Activated CD4-positive, alpha-beta T cell treated with anti-CD3 and anti-CD28 coated beads for 36 hours (primary cell): ENCODE measurements at regions of chrX and their contacts with region 1.

Region 1: DNA sequence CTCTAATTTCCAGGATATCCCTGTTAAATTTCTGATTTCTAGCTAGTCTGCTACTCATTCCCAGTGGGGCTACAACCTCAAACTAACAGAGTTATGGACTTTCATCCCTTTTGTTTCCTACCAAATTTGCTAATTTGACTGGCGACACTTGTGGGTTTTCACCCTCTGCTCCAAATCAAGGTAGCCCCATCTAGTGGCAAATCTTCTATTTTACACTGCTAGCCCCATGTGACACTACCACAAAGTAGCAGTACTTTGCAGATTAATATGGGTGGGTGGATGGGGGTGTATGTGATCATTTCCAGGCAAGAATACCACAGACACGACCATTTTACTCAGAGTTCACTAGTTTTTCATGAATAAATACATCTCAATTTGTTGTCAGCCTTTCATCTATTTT is 150.3 kb downstream of the MSL3 start:
- DNase-seq: peak; percentile 32
- ATAC-seq: peak; percentile 84
- H3K4me3 Mint-ChIP-seq: no peak overlapping the region
- H3K27ac Mint-ChIP-seq: no peak overlapping the region
- H3K4me1 Mint-ChIP-seq: peaks cover 8% of the 10 kb centered on the region
- H3K27me3 Mint-ChIP-seq: no peaks in the 10 kb centered on the region

Region 2: DNA sequence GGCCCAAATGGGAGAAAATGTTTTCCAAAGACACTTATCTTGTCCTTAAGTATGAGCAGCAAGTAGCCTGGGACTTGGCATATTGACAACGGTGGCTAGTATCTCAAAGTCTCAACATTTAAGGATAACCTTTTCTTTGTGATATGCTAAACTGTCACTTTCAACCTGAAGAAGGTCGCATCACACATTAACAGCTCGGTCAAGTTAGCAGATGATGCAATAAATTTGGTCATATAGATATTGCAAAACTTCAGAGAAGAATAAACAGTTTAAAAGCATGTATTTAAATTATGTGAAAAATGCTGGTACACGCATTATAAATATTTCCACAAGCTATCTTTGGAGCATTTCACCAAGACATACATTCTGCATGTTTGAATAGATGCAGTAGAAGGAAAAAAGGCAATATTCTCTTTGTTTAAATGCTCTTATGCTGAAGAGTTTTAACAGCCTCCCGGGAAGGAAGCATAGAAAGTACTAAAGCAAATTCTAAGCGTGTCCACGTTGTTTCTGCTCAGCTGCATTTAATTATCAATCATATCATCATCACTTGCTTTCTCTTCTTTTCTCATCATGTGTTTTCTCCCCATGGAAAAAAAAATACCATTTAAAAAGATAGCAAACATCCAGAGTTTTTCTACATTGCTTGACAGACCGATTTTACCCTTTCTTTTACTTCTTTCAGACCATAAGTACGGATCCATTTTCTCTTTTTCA is 266.9 kb before region 1 on chrX:
- CTCF ChIA-PET with region 1: no interaction called
- POLR2A ChIA-PET with region 1: no interaction called
- intact Hi-C with region 1: no loop called
- DNase-seq: no peak
- ATAC-seq: no peak
- H3K4me3 Mint-ChIP-seq: no peak overlapping the region
- H3K27ac Mint-ChIP-seq: no peak overlapping the region
- H3K4me1 Mint-ChIP-seq: no peaks in the 10 kb centered on the region
- H3K27me3 Mint-ChIP-seq: peaks cover 8% of the 10 kb centered on the region

Region 3: DNA sequence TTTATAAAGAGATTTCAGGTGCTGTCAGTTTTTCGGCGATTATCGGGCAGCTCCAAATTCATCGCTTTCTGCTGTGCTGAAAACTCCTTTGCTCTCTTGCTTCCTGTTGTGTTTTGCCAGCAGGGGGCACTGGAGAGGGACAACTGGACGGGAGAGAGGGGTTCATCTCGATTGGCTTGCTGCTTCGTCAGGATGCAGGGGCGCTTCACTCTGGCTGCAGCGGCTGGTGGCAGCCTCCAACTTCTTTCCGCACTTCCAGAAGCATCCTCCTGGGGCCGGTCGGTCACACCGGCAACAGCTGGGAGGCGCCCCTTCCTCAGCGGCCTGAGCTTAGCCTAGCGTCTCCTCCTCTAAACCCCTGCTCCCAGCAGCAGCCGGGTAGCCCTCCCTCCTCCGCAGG is 120.8 kb before region 1 on chrX:
- CTCF ChIA-PET with region 1: interaction called, 7 read pairs
- POLR2A ChIA-PET with region 1: no interaction called
- intact Hi-C with region 1: loop called (anchors 1 kb)
- DNase-seq: peak; percentile 85
- ATAC-seq: peak; percentile 84
- H3K4me3 Mint-ChIP-seq: peak overlapping the region; percentile 54
- H3K27ac Mint-ChIP-seq: no peak overlapping the region
- H3K4me1 Mint-ChIP-seq: peaks cover 31% of the 10 kb centered on the region
- H3K27me3 Mint-ChIP-seq: no peaks in the 10 kb centered on the region